Activated naive CD8-positive, alpha-beta T cell treated with anti-CD3 and anti-CD28 coated beads, Interleukin-2, amount 10 ng/mL, durations not matched to agents 7 days and 5 days (primary cell): ENCODE measurements at regions of chr3 and their contacts with region 1.

Region 1: DNA sequence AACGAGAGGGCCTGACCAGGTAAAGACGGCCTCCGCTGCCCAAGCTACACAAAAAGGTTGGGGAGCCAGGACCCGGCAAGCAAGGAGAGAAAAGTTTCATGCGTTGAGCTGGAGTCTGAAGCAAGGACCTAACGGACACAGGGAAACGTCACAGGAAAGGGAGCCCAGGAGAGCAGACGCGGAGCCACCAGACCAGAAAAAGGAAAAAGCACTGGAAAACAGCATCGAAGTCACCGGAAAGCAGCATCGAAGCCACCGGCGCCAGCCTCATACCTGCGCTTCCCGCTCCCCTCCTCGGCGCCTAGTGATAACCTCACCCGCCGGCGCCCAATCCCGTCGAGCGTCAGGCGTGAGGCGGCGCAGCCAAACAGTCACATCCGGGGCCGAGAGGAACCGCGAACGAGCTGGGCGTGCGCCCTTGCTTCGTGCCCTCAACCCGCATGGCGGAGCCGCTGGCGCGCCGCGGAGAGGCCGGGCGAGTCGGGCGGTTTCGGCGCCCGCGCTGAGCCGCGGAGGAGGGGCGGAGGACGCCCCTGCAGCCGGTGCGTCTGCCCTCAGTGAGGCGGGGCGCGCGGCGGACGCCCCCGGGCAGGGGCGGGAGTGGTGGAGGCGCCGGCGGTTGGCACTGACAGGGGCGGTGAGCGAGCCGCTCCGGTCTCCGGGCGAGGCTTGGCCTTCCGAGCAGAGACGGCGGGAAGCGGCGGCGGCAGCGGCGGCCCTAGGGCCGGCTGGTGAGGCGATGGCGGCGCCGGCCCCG is at the starts of genes FBXO45 and WDR53:
- DNase-seq: peak; percentile 97
- ATAC-seq: peak; percentile 95
- H3K4me3 Mint-ChIP-seq: peak within 1 kb of the TSS; percentile 99
- H3K27ac Mint-ChIP-seq: peak within 1 kb of the TSS; percentile 98
- H3K4me1 Mint-ChIP-seq: peaks cover 33% of the 10 kb centered on the region
- H3K27me3 Mint-ChIP-seq: no peaks in the 10 kb centered on the region
- total RNA-seq, gene FBXO45: 12.3 to 13.0 TPM
- total RNA-seq, gene WDR53: 20.0 to 20.4 TPM

Region 2: GRCh38 chr3:196489747-196490146 is 78.7 kb before region 1 on chr3:
- POLR2A ChIA-PET with region 1: no interaction called
- DNase-seq: no peak
- ATAC-seq: no peak
- H3K4me3 Mint-ChIP-seq: no peak overlapping the region
- H3K27ac Mint-ChIP-seq: no peak overlapping the region
- H3K4me1 Mint-ChIP-seq: peaks cover 10% of the 10 kb centered on the region
- H3K27me3 Mint-ChIP-seq: no peaks in the 10 kb centered on the region

Region 3: DNA sequence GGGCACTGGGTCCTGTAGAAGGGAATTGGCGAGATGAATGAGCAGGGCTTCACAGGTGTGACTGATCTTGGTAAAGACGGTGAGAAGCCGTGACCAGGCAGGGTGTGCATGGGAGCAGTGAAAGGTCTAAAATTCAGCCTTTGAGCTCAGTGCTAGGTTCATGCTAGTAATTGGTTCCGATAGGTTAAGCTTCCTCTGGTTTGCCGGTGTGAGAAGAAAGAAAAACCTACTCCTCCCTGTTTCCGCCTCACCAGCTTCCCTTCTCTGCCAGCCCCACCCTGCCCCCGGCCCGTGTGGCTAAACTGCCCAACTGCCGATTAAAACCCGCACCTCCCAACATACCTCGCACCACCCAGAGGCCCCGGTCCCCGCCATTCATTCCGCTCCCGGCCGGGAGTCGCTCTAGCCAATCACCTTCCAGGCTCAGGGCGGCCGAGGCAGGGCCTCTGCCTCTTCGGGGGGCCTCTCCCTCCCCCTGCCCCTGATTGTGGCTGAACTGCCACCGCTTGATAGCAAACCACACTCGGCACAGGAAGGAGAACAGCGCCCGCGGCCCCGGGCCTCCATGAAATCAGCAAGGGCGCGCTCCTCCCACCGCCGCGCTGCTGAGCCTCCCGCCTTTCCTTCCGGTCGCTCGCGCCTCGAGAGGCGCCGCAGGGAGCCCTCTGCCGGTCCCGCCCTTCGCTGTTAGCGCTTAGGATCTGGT is 63.8 kb after region 1 on chr3:
- POLR2A ChIA-PET with region 1: interaction called, 11 read pairs
- DNase-seq: peak; percentile 94
- ATAC-seq: peak; percentile 86
- H3K4me3 Mint-ChIP-seq: peak overlapping the region; percentile 77
- H3K27ac Mint-ChIP-seq: peak overlapping the region; percentile 95
- H3K4me1 Mint-ChIP-seq: peaks cover 38% of the 10 kb centered on the region
- H3K27me3 Mint-ChIP-seq: no peaks in the 10 kb centered on the region

Region 4: GRCh38 chr3:196639483-196640296 is 71.3 kb after region 1 on chr3 and contains the start of gene NRROS:
- POLR2A ChIA-PET with region 1: interaction called, 10 read pairs
- DNase-seq: peak; percentile 72
- ATAC-seq: peak; percentile 86
- H3K4me3 Mint-ChIP-seq: peak within 1 kb of the TSS; percentile 78
- H3K27ac Mint-ChIP-seq: peak within 1 kb of the TSS; percentile 90
- H3K4me1 Mint-ChIP-seq: peaks cover 50% of the 10 kb centered on the region
- H3K27me3 Mint-ChIP-seq: no peaks in the 10 kb centered on the region
- total RNA-seq, gene NRROS: 16.2 to 17.0 TPM

Region 5: GRCh38 chr3:196778755-196779154 is 210.3 kb after region 1 on chr3:
- POLR2A ChIA-PET with region 1: no interaction called
- DNase-seq: no peak
- ATAC-seq: no peak
- H3K4me3 Mint-ChIP-seq: no peak overlapping the region
- H3K27ac Mint-ChIP-seq: no peak overlapping the region
- H3K4me1 Mint-ChIP-seq: peaks cover 14% of the 10 kb centered on the region
- H3K27me3 Mint-ChIP-seq: no peaks in the 10 kb centered on the region